Activated CD4-positive, alpha-beta T cell treated with anti-CD3 and anti-CD28 coated beads for 36 hours (primary cell): ENCODE measurements at regions of chr6 and their contacts with region 1.

Region 1: DNA sequence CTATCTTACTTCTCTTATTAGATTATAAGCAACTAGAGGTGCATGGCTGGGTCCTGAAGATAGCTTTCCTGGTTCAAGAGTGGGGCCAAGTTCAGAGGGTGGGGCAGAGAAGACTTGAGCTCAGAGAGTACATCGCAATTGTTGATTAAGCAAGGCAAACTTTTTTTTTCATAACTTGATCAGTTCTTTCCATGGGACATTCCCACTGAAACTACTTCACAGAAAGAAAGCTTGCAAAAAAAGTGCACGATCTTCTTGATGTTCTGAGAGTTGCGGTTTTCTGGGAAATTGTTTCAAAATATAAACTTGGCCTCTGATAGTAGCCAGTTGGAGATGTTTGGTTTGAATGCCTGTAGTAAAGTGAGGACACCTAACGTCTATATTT is 100.9 kb downstream of the ZDHHC14 start:
- DNase-seq: no peak
- ATAC-seq: no peak
- H3K4me3 Mint-ChIP-seq: no peak overlapping the region
- H3K27ac Mint-ChIP-seq: no peak overlapping the region
- H3K4me1 Mint-ChIP-seq: peaks cover 10% of the 10 kb centered on the region
- H3K27me3 Mint-ChIP-seq: no peaks in the 10 kb centered on the region

Region 2: DNA sequence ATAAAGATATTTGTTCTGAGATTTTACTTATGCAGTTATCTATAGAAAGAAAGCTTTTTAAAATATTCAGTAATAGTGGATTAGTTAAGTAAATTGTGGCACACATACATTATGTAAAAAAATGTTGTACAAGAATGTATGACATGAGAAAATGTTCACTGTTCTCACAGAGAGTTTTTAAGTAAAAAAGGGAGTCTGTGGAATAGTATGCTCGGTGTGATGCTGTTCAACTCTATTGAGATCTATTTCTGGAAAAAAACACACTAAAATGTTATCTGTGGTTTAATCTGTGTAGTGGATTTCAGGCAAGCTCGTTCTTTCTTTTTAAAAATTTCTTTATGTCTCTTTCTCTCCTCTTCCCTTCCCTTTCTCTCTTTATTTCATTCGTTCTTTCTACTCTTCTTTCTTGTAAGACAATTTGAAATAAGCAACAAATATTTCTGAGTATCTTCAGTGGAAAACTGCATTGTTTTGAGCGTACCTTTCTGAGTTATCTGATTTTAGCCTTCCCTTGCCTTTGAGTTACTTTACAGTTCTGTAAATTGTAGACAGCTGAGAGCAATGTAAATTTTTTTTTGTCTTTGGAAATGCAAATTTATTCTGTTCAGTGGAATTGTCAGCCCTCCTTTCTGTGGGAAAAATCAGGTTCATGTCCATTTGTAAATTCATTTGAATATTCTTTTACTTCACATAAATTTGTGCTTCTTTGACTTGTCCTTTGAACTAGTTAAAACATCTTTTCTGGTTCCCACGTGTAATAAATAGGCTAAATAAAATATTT is 1797.3 kb before region 1 on chr6:
- CTCF ChIA-PET with region 1: no interaction called
- POLR2A ChIA-PET with region 1: interaction called, 10 read pairs
- intact Hi-C with region 1: no loop called
- DNase-seq: no peak
- ATAC-seq: no peak
- H3K4me3 Mint-ChIP-seq: no peak overlapping the region
- H3K27ac Mint-ChIP-seq: no peak overlapping the region
- H3K4me1 Mint-ChIP-seq: peaks cover 5% of the 10 kb centered on the region
- H3K27me3 Mint-ChIP-seq: peaks cover 4% of the 10 kb centered on the region

Region 3: DNA sequence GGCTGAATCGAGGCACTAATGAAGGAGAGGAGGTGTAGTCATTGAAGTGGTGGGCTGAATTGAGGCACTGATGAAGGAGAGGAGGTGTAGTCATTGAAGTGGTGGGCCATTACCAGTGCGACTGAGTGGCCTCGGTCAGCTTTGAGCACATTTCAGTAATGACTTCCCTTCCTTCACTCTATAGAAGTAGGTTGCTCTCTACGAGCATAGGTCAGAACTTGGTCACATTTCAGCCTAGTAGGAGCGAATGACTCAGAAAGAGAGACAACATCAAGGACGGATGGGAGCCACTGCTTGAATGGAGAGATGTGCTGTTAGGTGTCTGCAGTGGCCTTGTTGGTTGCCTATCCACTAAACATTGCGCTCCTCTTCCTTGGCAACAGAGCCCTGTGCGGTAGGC is 61.4 kb before region 1 on chr6:
- CTCF ChIA-PET with region 1: no interaction called
- POLR2A ChIA-PET with region 1: no interaction called
- intact Hi-C with region 1: no loop called
- DNase-seq: no peak
- ATAC-seq: no peak
- H3K4me3 Mint-ChIP-seq: no peak overlapping the region
- H3K27ac Mint-ChIP-seq: no peak overlapping the region
- H3K4me1 Mint-ChIP-seq: no peaks in the 10 kb centered on the region
- H3K27me3 Mint-ChIP-seq: no peaks in the 10 kb centered on the region

Region 4: DNA sequence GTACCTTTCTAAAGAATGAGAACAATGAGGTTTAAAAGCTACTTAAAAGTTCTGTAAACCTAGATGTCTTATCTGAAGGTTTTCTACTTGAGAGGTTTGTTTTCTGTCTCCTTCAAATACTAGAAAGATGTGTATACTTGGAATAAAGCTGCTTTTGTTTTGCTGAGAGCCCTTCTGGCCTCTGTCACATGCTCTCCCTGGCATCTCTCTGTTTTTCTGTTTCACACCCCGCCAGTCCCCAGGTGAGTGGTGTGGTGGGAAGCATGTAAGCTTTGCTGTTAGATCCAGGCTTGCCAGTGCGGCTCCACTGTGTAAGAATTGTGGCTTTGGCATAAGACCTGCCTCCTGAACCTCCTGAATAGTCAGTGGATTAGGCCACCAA is 398.0 kb after region 1 on chr6:
- CTCF ChIA-PET with region 1: no interaction called
- POLR2A ChIA-PET with region 1: no interaction called
- intact Hi-C with region 1: no loop called
- DNase-seq: no peak
- ATAC-seq: no peak
- H3K4me3 Mint-ChIP-seq: no peak overlapping the region
- H3K27ac Mint-ChIP-seq: peak overlapping the region; percentile 21
- H3K4me1 Mint-ChIP-seq: peaks cover 79% of the 10 kb centered on the region
- H3K27me3 Mint-ChIP-seq: no peaks in the 10 kb centered on the region

Region 5: DNA sequence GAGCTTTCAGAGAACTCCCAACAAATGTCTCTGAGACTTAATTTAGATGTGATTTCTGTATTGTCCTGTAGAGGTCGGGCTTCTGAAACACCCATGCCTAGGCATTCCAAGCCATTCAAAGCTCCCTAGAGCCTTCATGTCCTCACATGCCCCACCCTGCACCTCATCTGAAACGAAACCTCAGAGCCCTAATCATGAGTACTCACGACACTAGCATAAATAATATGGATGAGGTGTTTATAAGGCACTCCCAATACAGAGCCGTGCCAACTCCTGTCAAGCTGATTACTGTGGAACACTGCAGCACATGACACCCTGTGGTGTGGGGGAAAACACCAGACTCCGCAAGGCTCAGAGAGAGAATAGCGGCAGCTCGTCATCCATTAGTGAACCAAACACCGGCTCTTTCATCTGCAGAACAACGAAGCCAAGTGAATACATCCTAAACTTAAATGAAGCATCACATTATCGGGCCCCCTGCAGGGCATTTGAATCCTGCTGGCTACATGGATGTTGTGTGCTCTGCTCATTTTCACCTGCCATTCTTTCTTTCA is 1771.2 kb after region 1 on chr6:
- CTCF ChIA-PET with region 1: no interaction called
- POLR2A ChIA-PET with region 1: no interaction called
- intact Hi-C with region 1: no loop called
- DNase-seq: peak; percentile 14
- ATAC-seq: peak; percentile 53
- H3K4me3 Mint-ChIP-seq: no peak overlapping the region
- H3K27ac Mint-ChIP-seq: no peak overlapping the region
- H3K4me1 Mint-ChIP-seq: no peaks in the 10 kb centered on the region
- H3K27me3 Mint-ChIP-seq: peaks cover 11% of the 10 kb centered on the region